ENCODE measurements at regions of chr1 and their contacts with region 1.

Region 1: GRCh38 chr1:205396967-205397616 is 24.8 kb downstream of the LEMD1 start:
- DNase-seq: peak in 4 of 5 donors; percentile 6 to 53 (median 36)
- H3K4me3 ChIP-seq: no peak overlapping the region
- H3K4me3 Mint-ChIP-seq: no peak overlapping the region
- H3K27ac ChIP-seq: no peak overlapping the region
- H3K27ac Mint-ChIP-seq: peak overlapping the region in 1 of 8 donors; percentile 54
- H3K4me1 ChIP-seq: no peaks in the 10 kb centered on the region
- H3K4me1 Mint-ChIP-seq: peaks cover 7 to 10% (median 10%) of the 10 kb centered on the region in 3 donors
- H3K27me3 ChIP-seq: no peaks in the 10 kb centered on the region
- H3K27me3 Mint-ChIP-seq: peaks cover 8 to 21% of the 10 kb centered on the region in 2 donors

Region 2: DNA sequence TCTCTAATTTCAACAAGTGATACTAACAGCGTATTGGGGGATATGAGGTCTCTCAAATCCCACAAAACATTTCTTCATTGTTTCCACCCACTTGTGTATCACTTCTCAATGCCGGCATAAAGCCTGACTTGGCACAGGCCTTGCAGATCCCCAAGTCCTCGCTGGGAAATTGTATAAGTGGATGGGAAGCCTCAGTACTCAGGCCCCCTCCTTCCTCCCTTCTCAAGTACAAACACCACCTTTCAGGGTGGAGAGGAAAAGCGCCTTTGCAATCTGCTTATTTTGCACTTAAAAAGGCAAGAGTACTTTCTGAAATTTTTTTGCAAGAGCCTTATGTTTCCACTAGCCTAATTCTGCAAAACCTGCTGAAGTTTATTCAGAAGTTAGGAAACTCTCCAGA is 14.5 kb before region 1 on chr1:
- CTCF ChIA-PET with region 1: interaction called, 13 read pairs
- POLR2A ChIA-PET with region 1: no interaction called
- DNase-seq: no peak
- H3K4me3 ChIP-seq: no peak overlapping the region
- H3K4me3 Mint-ChIP-seq: no peak overlapping the region
- H3K27ac ChIP-seq: no peak overlapping the region
- H3K27ac Mint-ChIP-seq: no peak overlapping the region
- H3K4me1 ChIP-seq: no peaks in the 10 kb centered on the region
- H3K4me1 Mint-ChIP-seq: no peaks in the 10 kb centered on the region
- H3K27me3 ChIP-seq: no peaks in the 10 kb centered on the region
- H3K27me3 Mint-ChIP-seq: peaks cover 6 to 40% of the 10 kb centered on the region in 2 donors

Measured in CD8-positive, alpha-beta memory T cell (primary cell).